ENCODE measurements at regions of chr12 and their contacts with region 1.

Region 1: GRCh38 chr12:6533923-6534694 is at the start of gene GAPDH:
- DNase-seq: peak in 20 of 35 experiments; percentile 66 to 88 (median 79)
- ATAC-seq: peak; percentile 7 to 51 (median 40)
- H3K4me3 ChIP-seq: peak within 1 kb of the TSS; percentile 90 to 96
- H3K4me3 Mint-ChIP-seq: peak within 1 kb of the TSS; percentile 90 to 97 (median 94)
- H3K27ac ChIP-seq: peak within 1 kb of the TSS; percentile 90
- H3K27ac Mint-ChIP-seq: peak within 1 kb of the TSS; percentile 98
- H3K4me1 ChIP-seq: peaks cover 27 to 62% of the 10 kb centered on the region in 2 experiments
- H3K4me1 Mint-ChIP-seq: peaks cover 47 to 58% (median 50%) of the 10 kb centered on the region in 3 donors
- H3K27me3 ChIP-seq: no peaks in the 10 kb centered on the region
- H3K27me3 Mint-ChIP-seq: no peaks in the 10 kb centered on the region
- total RNA-seq, gene GAPDH: 500 to 643 (median 605) TPM

Region 2: GRCh38 chr12:5601783-5602182 is 932.3 kb before region 1 on chr12:
- CTCF ChIA-PET with region 1: no interaction called
- POLR2A ChIA-PET with region 1: no interaction called
- DNase-seq: no peak
- ATAC-seq: no peak
- H3K4me3 ChIP-seq: no peak overlapping the region
- H3K4me3 Mint-ChIP-seq: no peak overlapping the region
- H3K27ac ChIP-seq: no peak overlapping the region
- H3K27ac Mint-ChIP-seq: no peak overlapping the region
- H3K4me1 ChIP-seq: no peaks in the 10 kb centered on the region
- H3K4me1 Mint-ChIP-seq: no peaks in the 10 kb centered on the region
- H3K27me3 ChIP-seq: no peaks in the 10 kb centered on the region
- H3K27me3 Mint-ChIP-seq: peaks cover 2 to 17% of the 10 kb centered on the region in 2 donors

Region 3: DNA sequence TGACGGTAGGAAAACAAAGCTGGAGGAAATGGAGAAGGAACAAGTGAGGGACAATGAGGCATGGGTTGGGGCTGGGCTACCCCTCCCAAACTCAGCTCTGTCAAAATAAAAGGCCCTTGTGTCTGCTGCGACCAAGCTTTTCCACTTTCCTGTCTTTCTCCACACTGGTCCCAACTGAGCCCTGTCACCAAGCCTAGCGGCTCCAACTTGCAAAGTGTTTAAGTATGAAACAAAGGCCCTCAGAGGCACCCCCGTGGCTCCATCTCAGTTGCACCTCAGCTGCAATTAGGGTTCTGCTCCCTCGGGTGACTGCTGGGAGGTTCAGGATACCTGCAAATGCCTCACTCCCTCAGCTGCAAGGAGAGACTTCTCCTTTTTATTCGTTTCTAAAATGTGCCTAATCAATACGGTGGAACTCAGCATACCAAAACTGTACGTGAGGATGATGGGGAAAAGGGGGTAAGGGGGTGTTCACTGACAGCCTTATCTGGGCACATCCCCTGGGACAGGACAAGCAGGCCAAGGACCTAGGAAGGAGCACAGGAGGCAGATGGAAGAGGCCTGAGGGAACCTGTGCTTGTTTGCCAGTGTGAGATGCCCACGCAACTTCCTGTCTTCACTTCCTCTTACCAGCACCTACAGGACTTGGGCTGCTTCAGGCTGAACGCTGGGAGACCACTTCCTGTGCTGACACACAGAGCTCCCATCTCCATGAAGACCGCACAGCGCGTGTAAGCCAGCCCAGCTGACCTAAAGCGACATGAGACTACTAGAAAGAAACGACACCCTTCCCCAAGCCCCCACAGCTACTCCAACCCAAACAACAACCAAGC is 72.5 kb before region 1 on chr12:
- CTCF ChIA-PET with region 1: interaction called, 10 to 12 read pairs
- POLR2A ChIA-PET with region 1: interaction called in 1 of 2 experiments, 14 read pairs
- DNase-seq: peak; percentile 61 to 93 (median 85)
- ATAC-seq: peak; percentile 87 to 89 (median 88)
- H3K4me3 ChIP-seq: peak overlapping the region; percentile 29 to 30
- H3K4me3 Mint-ChIP-seq: peak overlapping the region; percentile 69 to 81 (median 69)
- H3K27ac ChIP-seq: peak overlapping the region; percentile 92
- H3K27ac Mint-ChIP-seq: peak overlapping the region; percentile 98
- H3K4me1 ChIP-seq: peaks cover 60 to 91% of the 10 kb centered on the region in 2 experiments
- H3K4me1 Mint-ChIP-seq: peaks cover 84 to 91% (median 90%) of the 10 kb centered on the region in 3 donors
- H3K27me3 ChIP-seq: no peaks in the 10 kb centered on the region
- H3K27me3 Mint-ChIP-seq: no peaks in the 10 kb centered on the region

Region 4: DNA sequence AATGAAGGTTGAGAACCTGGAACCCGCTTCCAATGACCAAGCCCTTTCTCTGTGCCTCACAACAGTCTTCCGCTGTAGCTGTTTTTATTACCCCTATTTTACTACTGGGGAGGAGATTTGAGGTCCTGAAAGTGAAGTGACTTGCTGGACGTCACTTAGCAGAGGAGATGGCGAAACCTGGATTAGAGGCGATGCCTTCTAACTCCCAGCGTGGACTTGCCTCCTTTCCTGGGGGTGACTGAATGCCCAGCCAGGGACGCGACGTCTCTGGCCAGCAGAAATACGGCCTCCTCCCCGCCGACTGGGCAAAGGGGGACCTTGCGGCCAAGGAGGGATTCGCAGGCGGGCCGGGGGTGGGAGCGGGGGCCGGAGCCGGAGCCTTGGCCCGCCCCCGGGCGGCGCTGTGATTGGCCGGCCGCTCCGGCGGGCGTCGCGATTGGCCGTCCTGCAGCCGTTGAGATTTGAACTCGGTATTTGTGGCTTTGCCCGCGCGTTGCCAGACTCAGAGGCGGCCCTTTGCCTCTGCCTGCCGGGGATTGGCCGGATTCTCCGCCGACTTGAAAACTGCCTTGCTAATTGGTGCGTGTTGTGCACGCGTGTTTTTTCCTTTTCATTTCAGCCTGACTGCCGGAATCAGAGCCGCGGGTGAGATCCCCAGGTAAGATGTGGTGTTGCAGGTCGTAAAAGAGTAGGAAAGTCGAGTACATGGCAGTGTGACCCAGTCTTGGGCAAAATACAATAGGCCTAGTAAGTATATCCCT is 40.4 kb before region 1 on chr12 and contains the start of gene NCAPD2:
- CTCF ChIA-PET with region 1: interaction called, 3 to 10 read pairs
- POLR2A ChIA-PET with region 1: interaction called, 4 to 13 read pairs
- DNase-seq: peak; percentile 86 to 97 (median 94)
- ATAC-seq: peak; percentile 86 to 91 (median 90)
- H3K4me3 ChIP-seq: peak within 1 kb of the TSS; percentile 94 to 99
- H3K4me3 Mint-ChIP-seq: peak within 1 kb of the TSS; percentile 93 to 97 (median 93)
- H3K27ac ChIP-seq: peak within 1 kb of the TSS; percentile 88
- H3K27ac Mint-ChIP-seq: peak within 1 kb of the TSS; percentile 91 to 98
- H3K4me1 ChIP-seq: peaks cover 21 to 33% of the 10 kb centered on the region in 2 experiments
- H3K4me1 Mint-ChIP-seq: peaks cover 37 to 40% (median 40%) of the 10 kb centered on the region in 3 donors
- H3K27me3 ChIP-seq: no peaks in the 10 kb centered on the region
- H3K27me3 Mint-ChIP-seq: no peaks in the 10 kb centered on the region
- total RNA-seq, gene NCAPD2: 32.8 to 43.8 (median 40.7) TPM

Region 5: DNA sequence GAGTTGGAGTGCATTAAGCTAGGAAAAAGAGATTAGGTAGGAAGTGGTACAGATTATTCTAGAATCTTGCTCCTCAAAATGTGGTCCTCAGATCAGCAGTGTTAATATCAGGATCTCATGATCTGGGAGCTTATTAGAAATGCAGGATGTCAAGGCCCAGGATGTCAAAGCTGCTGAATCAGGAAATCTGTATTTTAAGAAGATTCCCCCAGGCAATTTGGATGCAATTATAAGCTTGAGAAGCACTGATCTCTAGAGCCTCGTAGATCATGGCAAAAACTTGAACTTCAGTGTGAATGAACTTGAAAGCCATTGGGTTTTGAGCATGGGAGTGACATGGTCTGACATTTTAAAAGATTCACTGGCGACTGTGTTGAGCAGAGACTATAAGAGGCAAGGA is 33.6 kb before region 1 on chr12:
- CTCF ChIA-PET with region 1: interaction called, 7 to 15 read pairs
- POLR2A ChIA-PET with region 1: interaction called in 1 of 2 experiments, 3 read pairs
- DNase-seq: no peak
- ATAC-seq: no peak
- H3K4me3 ChIP-seq: no peak overlapping the region
- H3K4me3 Mint-ChIP-seq: no peak overlapping the region
- H3K27ac ChIP-seq: no peak overlapping the region
- H3K27ac Mint-ChIP-seq: no peak overlapping the region
- H3K4me1 ChIP-seq: peaks cover 3 to 12% of the 10 kb centered on the region in 2 experiments
- H3K4me1 Mint-ChIP-seq: peaks cover 7 to 14% (median 12%) of the 10 kb centered on the region in 3 donors
- H3K27me3 ChIP-seq: no peaks in the 10 kb centered on the region
- H3K27me3 Mint-ChIP-seq: no peaks in the 10 kb centered on the region

Measured in T-cell (primary cell).